GM12878 (cell line): ENCODE measurements at regions of chr3 and their contacts with region 1.

Region 1: DNA sequence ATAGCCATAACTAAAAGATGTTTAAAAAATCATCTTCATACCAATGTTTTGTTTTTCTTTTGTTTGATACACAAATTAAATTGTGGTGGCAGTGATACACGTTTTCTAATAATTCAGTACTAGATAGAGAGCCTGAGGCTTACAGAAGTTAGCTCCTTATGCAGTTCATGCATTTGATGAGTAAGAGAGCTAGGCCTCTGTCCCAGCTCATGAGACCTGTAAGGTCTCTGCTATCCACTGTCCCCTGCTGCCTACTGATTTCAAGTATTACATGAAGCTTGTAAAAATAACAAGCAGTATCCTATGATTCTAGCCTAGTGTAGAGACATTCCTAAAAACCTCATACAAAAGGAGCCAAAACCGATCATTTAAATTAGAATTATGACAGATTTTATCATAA is 144.5 kb downstream of the MBNL1 start:
- DNase-seq: no peak
- ATAC-seq: 0 out of 3 replicates have a peak, but pooled peaks have one; percentile 24
- H3K4me3 ChIP-seq: no peak overlapping the region
- H3K27ac ChIP-seq: no peak overlapping the region
- H3K4me1 ChIP-seq: no peaks in the 10 kb centered on the region
- H3K27me3 ChIP-seq: no peaks in the 10 kb centered on the region
- CTCF ChIP-seq: no peak
- EP300 ChIP-seq: no peak
- POLR2A ChIP-seq: no peak
- RAD21 ChIP-seq: no peak

Region 2: GRCh38 chr3:152289708-152290107 is 123.5 kb before region 1 on chr3:
- CTCF ChIA-PET with region 1: no interaction called
- POLR2A ChIA-PET with region 1: no interaction called
- RAD21 ChIA-PET with region 1: no interaction called
- SMC1A ChIA-PET with region 1: no interaction called
- in situ Hi-C with region 1: no loop called
- intact Hi-C with region 1: no loop called
- DNase-seq: no peak
- ATAC-seq: no peak
- H3K4me3 ChIP-seq: no peak overlapping the region
- H3K27ac ChIP-seq: no peak overlapping the region
- H3K4me1 ChIP-seq: peaks cover 8% of the 10 kb centered on the region
- H3K27me3 ChIP-seq: no peaks in the 10 kb centered on the region
- CTCF ChIP-seq: no peak
- EP300 ChIP-seq: no peak
- POLR2A ChIP-seq: no peak
- RAD21 ChIP-seq: no peak

Region 3: DNA sequence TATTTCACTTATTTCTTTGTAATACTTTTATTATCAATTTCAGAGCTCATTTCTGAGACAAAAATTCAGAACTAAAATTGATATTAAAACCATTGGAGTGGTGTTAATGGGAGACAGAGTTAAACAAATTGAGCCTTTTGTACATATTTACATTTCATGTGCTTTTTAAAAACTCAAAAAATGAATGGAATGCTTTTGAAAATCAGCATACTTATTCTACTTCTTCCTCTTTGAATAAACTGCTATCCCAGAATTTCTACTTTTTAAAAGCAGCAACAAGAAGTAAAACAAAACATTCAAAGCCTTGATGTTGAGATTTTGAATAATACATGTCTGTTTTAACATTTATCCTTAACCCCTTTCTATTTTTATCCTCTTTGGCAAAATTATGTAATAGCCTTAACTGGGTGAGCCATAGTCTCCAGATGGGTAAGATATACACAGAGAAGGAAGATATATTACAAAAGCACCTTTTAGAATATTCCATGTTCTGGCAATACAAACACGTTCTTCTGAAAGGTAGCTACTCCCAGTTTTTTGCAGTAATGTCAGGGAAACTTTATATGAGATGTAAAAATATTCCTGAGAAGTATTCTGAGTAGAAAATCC is 20.9 kb before region 1 on chr3:
- CTCF ChIA-PET with region 1: interaction called, 9 read pairs
- POLR2A ChIA-PET with region 1: no interaction called
- RAD21 ChIA-PET with region 1: no interaction called
- SMC1A ChIA-PET with region 1: interaction called, 16 read pairs
- in situ Hi-C with region 1: no loop called
- intact Hi-C with region 1: no loop called
- DNase-seq: no peak
- ATAC-seq: no peak
- H3K4me3 ChIP-seq: no peak overlapping the region
- H3K27ac ChIP-seq: no peak overlapping the region
- H3K4me1 ChIP-seq: no peaks in the 10 kb centered on the region
- H3K27me3 ChIP-seq: no peaks in the 10 kb centered on the region
- CTCF ChIP-seq: no peak
- EP300 ChIP-seq: no peak
- POLR2A ChIP-seq: no peak
- RAD21 ChIP-seq: no peak

Region 4: DNA sequence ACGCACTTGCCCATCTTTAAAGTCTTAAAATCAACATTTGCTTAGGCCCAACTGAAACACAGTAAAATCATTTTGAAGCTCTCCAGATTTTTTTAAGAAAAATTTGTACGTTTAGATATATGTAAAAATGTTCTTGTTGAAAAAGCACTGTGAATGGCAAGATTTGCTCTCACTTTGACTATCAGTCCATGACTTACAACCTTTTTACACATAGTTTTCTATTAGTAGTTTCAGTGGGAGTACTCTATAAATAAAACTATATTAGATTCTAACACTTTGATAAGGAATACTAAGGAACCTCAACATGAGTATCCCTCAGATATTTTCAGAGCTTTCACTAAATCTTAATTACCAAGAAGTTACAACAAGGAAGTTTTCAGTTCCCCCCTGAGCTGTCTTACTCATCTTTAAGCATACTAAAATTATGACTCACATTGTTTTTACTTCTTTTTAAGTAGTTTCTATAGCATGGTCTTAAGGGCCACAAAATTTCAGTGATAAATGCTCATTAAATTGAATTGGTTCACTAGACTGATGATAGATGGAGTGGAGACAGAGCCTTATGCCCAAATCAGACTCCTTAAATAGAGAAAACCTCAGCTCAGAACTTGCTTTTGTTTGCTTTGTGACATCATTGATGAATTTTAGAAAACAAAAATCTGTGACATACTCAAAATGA is 717.2 kb after region 1 on chr3:
- CTCF ChIA-PET with region 1: no interaction called
- POLR2A ChIA-PET with region 1: no interaction called
- RAD21 ChIA-PET with region 1: no interaction called
- SMC1A ChIA-PET with region 1: no interaction called
- in situ Hi-C with region 1: no loop called
- intact Hi-C with region 1: no loop called
- DNase-seq: peak; percentile 72
- ATAC-seq: peak; percentile 97
- H3K4me3 ChIP-seq: no peak overlapping the region
- H3K27ac ChIP-seq: peak overlapping the region; percentile 42
- H3K4me1 ChIP-seq: peaks cover 9% of the 10 kb centered on the region; the same call in 1 of the 2 replicates
- H3K27me3 ChIP-seq: no peaks in the 10 kb centered on the region
- CTCF ChIP-seq: no peak
- EP300 ChIP-seq: peak; percentile 87 to 88
- POLR2A ChIP-seq: no peak
- RAD21 ChIP-seq: no peak